ENCODE measurements at regions of chr19 and their contacts with region 1.

Region 1: GRCh38 chr19:45001087-45001739 is at the start of gene RELB:
- DNase-seq: peak; percentile 95
- total RNA-seq, gene RELB: 9.0 TPM

Region 2: GRCh38 chr19:44954824-44955586 is 46.2 kb before region 1 on chr19 and contains the start of gene CLPTM1:
- intact Hi-C with region 1: no loop called
- DNase-seq: peak; percentile 98
- total RNA-seq, gene CLPTM1: 87.4 TPM

Region 3: GRCh38 chr19:45038931-45039893 is 38.0 kb after region 1 on chr19 and contains the start of gene CLASRP:
- intact Hi-C with region 1: loop called (anchors 2 kb)
- DNase-seq: peak; percentile 97
- total RNA-seq, gene CLASRP: 45.6 TPM

Region 4: DNA sequence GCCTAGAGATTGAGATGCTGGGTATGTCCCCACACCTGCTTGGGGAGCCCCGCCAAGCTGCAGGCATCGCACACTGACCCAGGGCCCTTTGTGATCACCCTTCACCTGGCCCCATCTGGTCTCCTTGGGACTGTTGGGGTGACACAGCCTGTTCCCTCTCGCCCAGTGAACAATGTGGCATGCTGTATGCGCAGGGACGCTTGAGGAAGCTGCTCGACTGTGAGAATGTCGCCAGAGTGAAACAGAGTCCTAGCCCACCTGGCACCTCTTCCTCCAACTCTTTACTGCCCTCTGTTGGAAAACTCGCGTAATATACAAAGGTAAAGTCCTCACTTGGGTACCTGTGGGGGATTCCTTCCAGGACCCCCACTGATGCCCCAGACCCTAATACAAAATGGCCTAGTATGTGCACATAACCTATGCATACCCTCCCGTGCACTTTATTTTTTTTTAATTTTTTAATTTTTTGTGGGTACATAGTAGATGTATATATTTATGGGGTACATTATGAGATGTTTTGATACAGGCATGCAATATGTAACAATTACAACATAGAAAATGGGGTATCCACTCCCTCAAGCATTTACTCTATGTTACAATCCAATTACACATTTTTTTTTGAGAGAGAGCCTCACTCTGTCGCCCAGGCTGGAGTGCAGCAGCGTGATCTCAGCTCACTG is 186.3 kb after region 1 on chr19:
- intact Hi-C with region 1: no loop called
- DNase-seq: no peak